ENCODE measurements at regions of chr6 and their contacts with region 1.

Region 1: GRCh38 chr6:63635588-63636517 is at the start of gene PHF3:
- DNase-seq: peak; percentile 70 to 96 (median 92)

Region 2: GRCh38 chr6:63487138-63487813 is 148.6 kb before region 1 on chr6:
- intact Hi-C with region 1: no loop called
- DNase-seq: no peak

Region 3: GRCh38 chr6:63571881-63572732 is 63.7 kb before region 1 on chr6 and contains the starts of genes LOC128125822 and PTP4A1:
- intact Hi-C with region 1: loop called (anchors 2 kb)
- DNase-seq: peak; percentile 96 to 100 (median 99)

Region 4: GRCh38 chr6:63598049-63599036 is 37.5 kb before region 1 on chr6:
- intact Hi-C with region 1: loop called (anchors 2 kb)
- DNase-seq: peak; percentile 64 to 93 (median 80)

Region 5: DNA sequence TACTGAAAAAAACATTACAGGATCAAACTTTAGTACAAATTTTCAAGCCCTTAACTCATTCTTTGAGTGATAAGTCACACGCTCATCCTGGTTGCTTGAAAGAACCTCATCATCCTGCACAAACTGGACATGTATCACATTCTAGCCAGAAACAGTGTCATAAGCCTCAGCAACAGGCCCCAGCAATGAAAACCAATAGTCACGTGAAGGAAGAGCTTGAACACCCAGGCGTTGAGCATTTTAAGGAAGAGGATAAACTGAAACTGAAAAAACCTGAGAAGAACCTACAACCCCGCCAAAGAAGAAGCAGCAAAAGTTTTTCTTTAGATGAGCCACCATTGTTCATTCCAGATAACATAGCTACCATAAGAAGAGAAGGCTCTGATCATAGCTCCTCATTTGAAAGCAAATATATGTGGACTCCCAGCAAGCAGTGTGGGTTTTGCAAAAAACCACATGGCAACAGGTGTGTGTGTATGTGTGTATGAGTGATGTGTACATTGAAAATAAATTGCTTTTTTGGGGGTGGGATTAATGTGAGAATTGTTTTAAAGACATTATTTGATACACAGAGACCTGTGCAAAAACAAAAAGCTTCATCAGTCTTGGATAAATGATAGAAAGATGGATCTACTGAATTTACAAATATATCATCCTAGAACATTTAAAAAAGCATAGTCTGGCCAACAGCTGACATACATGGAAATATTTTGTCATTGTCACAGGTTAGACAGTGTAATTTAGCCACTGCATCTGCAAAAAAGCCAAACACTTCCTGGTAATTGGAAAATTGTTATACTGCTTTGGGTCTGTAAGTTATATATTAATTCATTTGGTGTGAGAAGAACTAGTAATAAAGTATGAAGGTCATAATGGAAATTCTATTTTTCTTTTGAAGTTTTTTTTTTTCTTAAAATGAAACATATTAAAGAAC is 49.9 kb after region 1 on chr6:
- intact Hi-C with region 1: loop called (anchors 10 kb)
- DNase-seq: no peak